Activated naive CD4-positive, alpha-beta T cell treated with anti-CD3 and anti-CD28 coated beads for 36 hours (primary cell): ENCODE measurements at regions of chr4 and their contacts with region 1.

Region 1: DNA sequence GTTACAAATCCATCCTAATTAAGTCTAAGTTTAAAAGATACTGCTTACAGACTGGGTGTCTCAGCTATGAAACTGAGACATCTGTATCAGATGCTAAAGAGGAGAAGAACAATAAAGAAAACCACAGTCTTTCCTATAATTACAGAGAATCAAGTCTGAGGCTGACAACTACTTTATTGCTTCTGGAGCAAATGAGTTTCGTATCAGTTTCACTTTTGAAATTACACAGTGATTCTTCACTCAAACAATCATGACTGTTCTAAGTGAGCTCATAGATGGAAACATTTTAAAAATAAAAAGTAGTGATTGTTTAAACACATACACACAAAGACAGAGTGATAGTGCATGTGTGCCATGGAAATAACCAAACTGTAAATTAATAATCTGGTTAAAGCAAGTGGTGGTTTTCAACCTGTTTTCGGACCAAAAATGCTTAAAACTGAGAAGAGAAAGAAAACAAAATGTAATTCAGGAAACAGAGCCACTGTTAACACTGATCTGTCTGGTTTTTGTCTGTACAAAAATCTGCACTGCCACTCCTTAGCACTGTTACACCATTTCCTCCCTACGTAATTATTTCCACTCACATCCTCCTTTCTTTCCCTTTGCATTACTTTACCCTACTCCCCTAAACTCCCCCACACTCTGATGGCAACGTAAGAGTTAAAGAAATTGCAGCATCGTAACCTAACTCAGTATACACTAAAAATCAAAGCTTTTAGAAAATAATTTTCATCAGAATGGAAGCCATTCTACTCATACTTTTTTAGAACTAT is 12.5 kb downstream of the RFC1 start:
- DNase-seq: peak; percentile 44
- H3K4me3 Mint-ChIP-seq: peak overlapping the region; percentile 55
- H3K27ac Mint-ChIP-seq: peak overlapping the region; percentile 95
- H3K4me1 Mint-ChIP-seq: peaks cover 83% of the 10 kb centered on the region
- H3K27me3 Mint-ChIP-seq: no peaks in the 10 kb centered on the region

Region 2: GRCh38 chr4:38560768-38561558 is 792.7 kb before region 1 on chr4:
- CTCF ChIA-PET with region 1: no interaction called
- intact Hi-C with region 1: loop called (anchors 1 kb)
- DNase-seq: peak; percentile 60
- H3K4me3 Mint-ChIP-seq: no peak overlapping the region
- H3K27ac Mint-ChIP-seq: no peak overlapping the region
- H3K4me1 Mint-ChIP-seq: peaks cover 16% of the 10 kb centered on the region
- H3K27me3 Mint-ChIP-seq: peaks cover 2% of the 10 kb centered on the region

Region 3: DNA sequence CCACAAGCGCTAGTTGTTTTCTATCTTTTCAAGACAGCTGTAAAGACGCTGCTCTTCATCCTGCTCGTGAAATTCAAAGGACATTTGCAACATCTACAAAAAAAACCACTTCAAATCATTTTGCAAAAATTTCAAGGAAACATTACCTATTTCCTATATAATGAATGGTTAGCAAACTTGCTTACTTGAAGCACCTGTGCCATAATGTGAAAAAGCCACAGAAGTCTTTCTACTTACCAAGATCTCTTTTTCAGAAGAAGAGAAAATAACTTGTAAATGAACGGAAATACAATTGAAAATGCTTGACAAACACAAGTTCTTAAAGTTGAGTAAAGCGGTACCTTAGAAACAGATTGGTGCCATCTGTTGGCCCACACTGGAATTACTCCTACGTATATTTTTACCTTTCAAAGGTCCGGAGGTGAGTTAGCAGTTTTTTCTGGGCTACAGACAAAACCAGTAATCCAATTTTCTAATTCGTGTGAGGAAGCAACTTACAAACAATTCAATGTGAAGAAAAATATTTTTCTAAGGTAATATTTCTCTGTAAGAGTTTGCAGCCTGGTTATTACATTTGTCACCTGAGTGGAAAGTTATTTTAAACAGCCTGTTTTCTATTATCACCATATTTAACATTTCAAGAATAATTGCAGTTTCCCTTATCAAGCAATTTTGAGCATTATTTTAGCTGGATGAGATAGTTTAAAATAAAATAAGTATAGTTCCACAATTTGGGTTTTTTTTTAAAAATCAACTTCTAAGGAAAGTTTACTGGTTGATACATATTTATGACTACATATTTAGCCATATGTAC is 496.9 kb before region 1 on chr4 and contains the start of gene TLR6:
- CTCF ChIA-PET with region 1: no interaction called
- intact Hi-C with region 1: loop called (anchors 1 kb)
- DNase-seq: peak; percentile 86
- H3K4me3 Mint-ChIP-seq: peak within 1 kb of the TSS; percentile 66
- H3K27ac Mint-ChIP-seq: peak within 1 kb of the TSS; percentile 84
- H3K4me1 Mint-ChIP-seq: peaks cover 35% of the 10 kb centered on the region
- H3K27me3 Mint-ChIP-seq: no peaks in the 10 kb centered on the region
- total RNA-seq, gene TLR6: 3.6 TPM

Region 4: DNA sequence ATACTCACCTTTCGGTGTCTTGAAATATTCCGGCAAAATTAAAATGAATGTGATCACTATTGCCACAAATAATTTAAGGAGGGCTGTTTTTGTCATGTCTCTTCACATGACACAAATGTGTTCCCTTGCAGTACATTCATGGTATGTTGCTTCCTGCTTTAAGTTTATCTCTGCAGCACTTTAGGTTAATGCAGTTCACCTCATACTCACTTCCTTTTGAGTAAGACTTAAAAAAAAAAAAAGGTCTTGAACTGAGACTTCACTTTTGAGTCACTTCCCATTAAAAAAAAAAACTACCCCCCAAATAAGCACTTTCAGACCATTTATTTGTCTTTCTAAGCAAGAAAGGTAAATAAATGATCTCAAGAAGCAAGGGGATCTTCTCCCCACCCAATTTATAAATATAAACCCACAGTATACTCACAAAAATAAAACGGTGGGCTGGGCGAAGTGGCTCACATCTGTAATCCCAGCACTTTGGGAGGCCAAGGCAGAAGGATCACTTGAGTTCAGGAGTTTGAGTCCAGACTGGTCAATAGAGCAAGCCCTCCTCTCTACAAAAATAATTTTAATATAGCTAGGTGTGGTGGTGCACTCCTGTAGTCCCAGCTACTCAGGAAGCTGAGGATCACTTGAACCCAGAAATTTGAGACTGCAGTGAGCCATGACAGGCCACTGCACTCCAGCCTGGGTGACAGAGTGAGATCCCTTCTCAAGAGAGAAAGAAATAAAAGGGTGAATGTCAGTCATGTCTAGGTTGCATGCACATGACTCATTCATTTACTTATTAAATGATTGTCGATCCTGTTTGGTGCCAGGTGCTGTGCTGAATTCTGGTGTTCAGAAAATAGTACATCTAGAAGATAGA is 321.2 kb before region 1 on chr4 and contains the start of gene TMEM156:
- CTCF ChIA-PET with region 1: no interaction called
- intact Hi-C with region 1: loop called (anchors 1 kb)
- DNase-seq: peak; percentile 65
- H3K4me3 Mint-ChIP-seq: peak within 1 kb of the TSS; percentile 77
- H3K27ac Mint-ChIP-seq: peak within 1 kb of the TSS; percentile 89
- H3K4me1 Mint-ChIP-seq: peaks cover 57% of the 10 kb centered on the region
- H3K27me3 Mint-ChIP-seq: no peaks in the 10 kb centered on the region
- total RNA-seq, gene TMEM156: 10.2 to 11.3 TPM

Region 5: GRCh38 chr4:39446751-39447573 is 93.3 kb after region 1 on chr4:
- CTCF ChIA-PET with region 1: no interaction called
- intact Hi-C with region 1: loop called (anchors 1 kb)
- DNase-seq: peak; percentile 74
- H3K4me3 Mint-ChIP-seq: peak overlapping the region; percentile 32
- H3K27ac Mint-ChIP-seq: no peak overlapping the region
- H3K4me1 Mint-ChIP-seq: peaks cover 22% of the 10 kb centered on the region
- H3K27me3 Mint-ChIP-seq: no peaks in the 10 kb centered on the region

Region 6: DNA sequence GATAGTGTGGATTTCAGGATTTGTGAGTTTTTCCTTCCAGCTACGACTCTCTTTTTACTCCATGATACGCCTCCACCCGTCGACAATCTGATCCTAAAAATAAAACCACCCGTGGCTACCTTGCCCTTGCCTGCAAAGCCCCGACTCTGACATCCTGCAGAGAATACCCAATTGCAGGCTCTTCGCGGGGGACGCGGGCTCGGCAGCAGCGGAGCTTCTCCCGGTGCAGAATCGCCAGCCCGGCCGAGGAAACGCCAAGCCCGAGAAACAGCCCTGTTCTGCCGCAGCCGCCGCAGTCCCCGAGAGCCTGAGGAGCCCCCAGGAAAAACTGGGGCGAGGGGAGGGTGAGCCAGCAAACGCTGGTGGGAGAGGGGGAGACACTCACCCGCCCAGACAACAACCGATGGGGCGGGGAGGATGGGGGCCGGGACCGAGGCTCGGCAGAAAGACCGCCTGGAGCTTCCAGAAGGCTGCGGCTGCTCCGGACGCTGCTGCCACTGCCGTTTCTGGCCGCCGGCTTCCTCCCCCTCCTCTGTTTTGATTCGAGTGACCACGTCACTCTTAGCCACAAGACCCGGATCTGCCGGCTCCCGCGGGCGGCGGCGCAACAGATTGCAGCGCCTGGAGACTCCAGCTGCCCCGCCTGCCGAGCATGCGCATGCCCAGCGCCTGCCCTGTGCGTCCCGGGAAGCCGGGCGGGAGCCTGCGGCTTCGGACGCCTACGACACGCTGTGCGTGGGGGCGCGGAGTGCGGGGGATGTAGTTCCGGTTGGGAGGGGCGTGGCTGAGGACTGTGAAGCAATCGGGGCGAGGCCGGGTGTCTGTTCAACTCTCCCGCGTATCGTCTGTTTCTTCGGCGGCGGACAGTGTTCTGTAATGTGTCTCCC is 284.9 kb after region 1 on chr4 and contains the start of gene SMIM14:
- CTCF ChIA-PET with region 1: no interaction called
- intact Hi-C with region 1: loop called (anchors 2 kb)
- DNase-seq: peak; percentile 93
- H3K4me3 Mint-ChIP-seq: peak within 1 kb of the TSS; percentile 85
- H3K27ac Mint-ChIP-seq: peak within 1 kb of the TSS; percentile 69
- H3K4me1 Mint-ChIP-seq: peaks cover 24% of the 10 kb centered on the region
- H3K27me3 Mint-ChIP-seq: no peaks in the 10 kb centered on the region
- total RNA-seq, gene SMIM14: 2.7 to 3.9 TPM

Region 7: GRCh38 chr4:40205259-40206198 is 851.9 kb after region 1 on chr4:
- CTCF ChIA-PET with region 1: no interaction called
- intact Hi-C with region 1: loop called (anchors 5 kb)
- DNase-seq: peak; percentile 68
- H3K4me3 Mint-ChIP-seq: peak overlapping the region; percentile 85
- H3K27ac Mint-ChIP-seq: peak overlapping the region; percentile 98
- H3K4me1 Mint-ChIP-seq: peaks cover 51% of the 10 kb centered on the region
- H3K27me3 Mint-ChIP-seq: no peaks in the 10 kb centered on the region